ENCODE measurements at regions of chr2 and their contacts with region 1.

Region 1: DNA sequence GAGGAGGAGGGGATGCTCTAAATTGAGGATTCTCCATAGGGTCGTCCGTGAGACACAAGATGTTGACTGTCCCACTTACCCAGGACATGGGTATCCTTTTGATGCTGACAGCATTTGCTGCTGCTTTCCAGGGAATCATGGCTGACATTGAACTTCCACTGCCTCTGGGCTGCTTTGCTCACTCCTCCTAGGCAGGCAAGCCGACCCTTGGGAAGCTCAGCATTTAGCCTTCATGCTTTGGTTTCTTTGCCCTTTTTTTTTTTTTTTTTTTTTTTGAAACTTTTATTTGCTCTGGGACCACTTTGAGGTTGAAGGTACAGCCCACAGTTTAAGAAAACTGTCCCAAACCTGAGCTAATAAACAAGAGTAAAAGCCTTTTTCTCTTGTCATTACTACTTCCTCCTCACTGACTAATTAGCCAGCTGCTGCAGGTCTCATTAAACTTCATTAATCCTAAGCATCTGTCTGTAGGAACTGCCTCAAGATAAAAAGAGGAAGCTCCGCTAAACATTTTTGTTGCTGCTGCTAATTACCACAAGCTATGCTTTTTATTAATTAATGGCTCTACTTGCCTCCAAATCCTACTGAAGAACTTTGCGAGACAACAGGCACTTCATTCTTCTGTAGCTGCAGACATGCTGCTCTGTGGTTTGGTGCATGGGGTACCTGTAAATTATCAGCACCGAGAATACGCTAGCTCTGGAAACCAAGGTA is 125.4 kb downstream of the SPTBN1 start:
- H3K4me3 ChIP-seq: no peak overlapping the region
- H3K27ac ChIP-seq: no peak overlapping the region
- H3K4me1 ChIP-seq: peaks cover 48% of the 10 kb centered on the region
- CTCF ChIP-seq: no peak

Region 2: DNA sequence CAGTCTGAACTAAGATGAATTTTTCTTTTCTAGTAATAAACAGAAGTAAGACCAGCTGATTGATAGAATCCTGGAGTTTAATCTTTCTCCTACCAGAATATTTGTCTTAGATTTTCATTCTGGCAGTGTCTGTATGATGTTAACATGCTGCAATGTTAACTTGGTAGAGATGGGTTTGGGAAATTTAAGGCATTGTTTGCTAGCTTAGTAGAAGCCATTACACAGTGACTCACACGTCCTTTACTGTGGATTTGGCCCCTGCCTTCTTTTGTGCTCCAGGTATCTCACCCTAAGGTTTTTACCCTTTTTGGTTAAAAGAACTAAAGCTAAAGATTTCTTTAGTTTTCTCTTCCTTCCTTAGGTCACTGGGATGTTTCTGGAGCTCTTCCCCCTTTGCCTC is 41.3 kb before region 1 on chr2:
- CTCF ChIA-PET with region 1: no interaction called
- POLR2A ChIA-PET with region 1: no interaction called
- H3K4me3 ChIP-seq: no peak overlapping the region
- H3K27ac ChIP-seq: no peak overlapping the region
- H3K4me1 ChIP-seq: no peaks in the 10 kb centered on the region
- CTCF ChIP-seq: no peak

Region 3: GRCh38 chr2:54570925-54571694 is 10.4 kb before region 1 on chr2:
- CTCF ChIA-PET with region 1: interaction called, 4 read pairs
- POLR2A ChIA-PET with region 1: interaction called, 11 read pairs
- H3K4me3 ChIP-seq: no peak overlapping the region
- H3K27ac ChIP-seq: peak overlapping the region; percentile 98
- H3K4me1 ChIP-seq: peaks cover 62% of the 10 kb centered on the region
- CTCF ChIP-seq: no peak

Region 4: DNA sequence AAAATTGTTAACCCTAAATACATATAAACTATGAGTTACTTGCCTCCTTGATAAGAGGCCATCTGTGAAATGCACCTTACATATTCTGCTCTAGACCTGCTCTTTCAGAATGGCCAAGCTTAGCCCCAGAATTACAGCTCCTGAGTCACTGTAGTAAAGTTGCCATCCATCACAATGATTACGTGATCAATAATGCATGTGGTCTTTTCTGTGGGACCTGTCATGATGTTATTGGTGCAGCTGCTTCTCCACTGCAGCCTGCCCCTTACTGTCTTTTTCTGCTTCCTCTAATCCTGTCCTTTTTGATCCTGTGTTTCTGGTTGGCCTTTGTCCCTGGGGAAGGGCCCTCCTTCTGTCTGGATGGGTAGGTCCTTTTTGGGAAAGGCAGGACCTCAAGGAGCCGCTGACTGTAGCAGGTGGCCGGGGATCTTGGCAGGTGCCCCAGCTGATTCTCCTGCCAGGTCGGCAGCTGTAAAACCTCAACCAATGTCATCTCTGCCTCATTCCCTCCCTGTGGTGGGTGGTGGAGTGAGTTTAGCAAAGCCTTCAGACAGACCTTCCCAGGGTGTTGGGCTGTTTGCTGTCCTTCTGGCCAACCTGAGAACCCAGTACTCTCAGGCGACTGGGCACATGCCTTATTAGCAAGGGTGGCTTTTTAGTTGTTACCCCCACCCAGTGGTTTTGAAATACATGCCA is 15.8 kb after region 1 on chr2:
- CTCF ChIA-PET with region 1: no interaction called
- POLR2A ChIA-PET with region 1: no interaction called
- H3K4me3 ChIP-seq: no peak overlapping the region
- H3K27ac ChIP-seq: no peak overlapping the region
- H3K4me1 ChIP-seq: no peaks in the 10 kb centered on the region
- CTCF ChIP-seq: no peak

Region 5: GRCh38 chr2:54610700-54611099 is 29.2 kb after region 1 on chr2:
- CTCF ChIA-PET with region 1: no interaction called
- POLR2A ChIA-PET with region 1: no interaction called
- H3K4me3 ChIP-seq: no peak overlapping the region
- H3K27ac ChIP-seq: no peak overlapping the region
- H3K4me1 ChIP-seq: no peaks in the 10 kb centered on the region
- CTCF ChIP-seq: no peak

Region 6: DNA sequence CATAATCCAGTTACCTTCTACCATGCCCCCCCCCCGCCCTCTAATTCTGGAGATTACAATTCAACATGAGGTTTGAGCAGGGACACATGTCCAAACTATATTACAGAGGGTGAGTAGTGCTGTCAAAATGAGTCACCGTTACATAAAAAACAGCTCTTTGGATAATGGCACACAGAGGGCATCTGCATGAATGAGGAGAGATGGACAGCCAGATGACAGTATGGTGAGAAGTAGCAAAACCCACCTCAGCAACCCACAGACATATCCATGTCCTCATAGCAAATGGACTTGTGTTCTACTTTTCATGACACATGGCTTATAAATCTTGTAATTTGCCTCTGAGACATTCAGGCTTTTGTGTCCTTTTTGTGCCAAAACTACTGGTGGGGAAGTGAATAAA is 274.0 kb after region 1 on chr2:
- CTCF ChIA-PET with region 1: no interaction called
- POLR2A ChIA-PET with region 1: no interaction called
- H3K4me3 ChIP-seq: no peak overlapping the region
- H3K27ac ChIP-seq: no peak overlapping the region
- H3K4me1 ChIP-seq: no peaks in the 10 kb centered on the region
- CTCF ChIP-seq: no peak

Measured in HEK293 (cell line).